Left colon (tissue), 2 donors: ENCODE measurements at regions of chr6 and their contacts with region 1.

Region 1: GRCh38 chr6:126661646-126662045 is 321.7 kb downstream of the CENPW start:
- DNase-seq: no peak
- ATAC-seq: no peak

Region 2: DNA sequence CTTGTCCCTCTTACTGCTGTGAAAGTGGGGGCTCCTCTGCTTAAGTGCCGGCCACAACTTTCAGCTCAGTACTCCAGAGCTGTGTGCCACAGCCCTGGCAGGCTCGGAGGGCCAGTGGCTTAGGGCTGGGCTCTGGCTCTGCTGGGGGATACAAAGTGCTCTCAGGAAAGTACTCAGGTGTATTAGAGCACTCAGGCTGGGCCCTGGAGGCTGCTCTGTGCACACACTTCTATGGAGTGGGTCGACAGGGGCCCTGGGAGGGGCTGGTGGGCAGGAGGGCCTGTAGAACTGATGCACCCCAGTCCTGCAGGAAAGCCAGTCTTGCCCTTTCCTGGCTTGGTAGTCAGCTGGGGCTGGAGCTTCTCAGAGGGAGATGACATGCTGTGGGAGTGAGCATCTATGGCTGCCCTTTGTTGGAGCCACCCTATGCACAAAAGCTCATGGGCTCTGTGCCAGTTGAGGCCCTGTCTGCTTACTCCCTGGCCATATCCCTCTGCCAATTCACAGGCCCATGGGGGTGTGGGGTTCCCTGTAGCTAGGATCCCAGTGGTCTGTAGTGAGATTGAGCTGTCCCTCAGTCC is 299.7 kb before region 1 on chr6:
- intact Hi-C with region 1: loop called in 1 of 2 experiments (anchors 10 kb)
- DNase-seq: no peak
- ATAC-seq: no peak

Region 3: DNA sequence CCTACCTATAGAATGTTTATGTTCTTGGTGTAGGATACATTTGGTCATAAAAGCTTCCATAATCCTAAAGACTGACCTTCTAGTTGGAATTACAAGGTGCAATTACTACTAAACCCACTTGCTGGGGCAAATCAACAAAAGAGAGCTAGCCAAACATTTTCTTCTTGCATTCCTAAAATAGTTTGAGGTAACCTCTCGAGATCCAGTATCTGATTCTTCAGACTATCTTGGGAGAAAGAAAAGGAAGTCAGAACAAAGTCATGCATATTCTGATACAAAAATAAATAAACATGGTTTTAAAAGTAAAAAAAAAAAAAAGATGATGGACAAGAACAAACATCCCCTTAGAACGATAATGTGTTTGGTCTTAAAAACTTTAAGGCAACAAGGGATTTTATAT is 162.6 kb after region 1 on chr6:
- intact Hi-C with region 1: no loop called
- DNase-seq: no peak
- ATAC-seq: no peak